ENCODE measurements at regions of chr4 and their contacts with region 1.

Region 1: DNA sequence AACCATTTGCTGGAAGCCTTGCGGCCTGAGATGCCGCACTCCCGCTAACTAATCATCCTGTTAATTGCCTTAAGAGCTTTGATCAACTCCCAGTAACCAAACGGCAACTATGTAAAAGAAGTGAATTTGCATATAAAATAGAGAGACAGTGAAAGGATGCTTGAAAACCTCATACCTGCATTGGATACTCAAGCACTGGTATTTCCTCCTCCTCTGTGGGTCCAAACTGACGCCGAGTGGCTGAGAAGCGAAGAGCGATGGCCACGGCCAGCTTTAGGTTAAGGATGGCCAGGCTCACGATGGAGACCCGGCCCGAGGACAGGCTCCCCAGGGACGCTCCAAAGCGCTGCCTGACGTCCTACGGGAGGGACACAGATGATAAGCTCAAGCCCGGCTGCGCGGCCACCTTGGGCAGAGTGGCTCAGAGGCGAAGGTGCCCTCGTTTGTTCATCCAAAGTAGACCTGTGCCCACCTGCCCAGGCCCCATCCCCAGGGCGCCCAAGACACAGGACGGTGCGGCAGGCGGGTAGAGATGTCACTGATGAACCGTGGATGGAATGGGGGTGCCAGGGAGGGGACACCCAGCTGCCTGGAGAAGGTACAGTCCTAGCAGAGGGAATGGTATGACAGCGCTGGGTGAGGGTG is 43.6 kb downstream of the ACOX3 start:
- DNase-seq: no peak
- ATAC-seq: no peak
- H3K4me3 ChIP-seq: no peak overlapping the region
- H3K27ac ChIP-seq: no peak overlapping the region
- H3K4me1 ChIP-seq: no peaks in the 10 kb centered on the region
- H3K27me3 ChIP-seq: no peaks in the 10 kb centered on the region
- CTCF ChIP-seq: no peak

Region 2: GRCh38 chr4:8270912-8271815 is 125.7 kb before region 1 on chr4:
- CTCF ChIA-PET with region 1: no interaction called
- POLR2A ChIA-PET with region 1: interaction called, 10 read pairs
- in situ Hi-C with region 1: no loop called
- intact Hi-C with region 1: no loop called
- DNase-seq: no peak
- ATAC-seq: no peak
- H3K4me3 ChIP-seq: no peak overlapping the region
- H3K27ac ChIP-seq: no peak overlapping the region
- H3K4me1 ChIP-seq: no peaks in the 10 kb centered on the region
- H3K27me3 ChIP-seq: no peaks in the 10 kb centered on the region; the same call in 1 of the 2 replicates
- CTCF ChIP-seq: no peak